ENCODE measurements at regions of chr7 and their contacts with region 1.

Region 1: DNA sequence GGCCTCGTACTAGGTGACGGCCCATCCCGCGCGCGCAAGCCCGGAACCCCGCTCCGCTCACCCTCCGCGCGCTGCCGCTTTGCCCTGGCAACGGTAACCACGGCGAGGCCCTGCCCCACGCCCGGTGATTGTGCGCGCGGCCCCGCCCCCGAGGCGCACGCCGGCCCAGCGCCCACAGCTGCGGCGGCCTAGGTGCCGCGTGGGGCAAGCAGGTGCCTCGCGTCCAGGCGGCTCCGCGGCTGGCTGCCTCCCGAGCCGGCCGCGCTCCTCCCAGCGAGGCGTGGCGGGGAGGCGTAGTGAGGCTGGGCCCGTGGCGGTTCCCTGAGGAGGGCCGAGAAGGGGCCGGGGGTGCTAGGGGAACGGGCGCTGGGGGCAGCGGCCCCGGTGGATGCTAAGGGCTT is at the start of gene SMKR1:
- DNase-seq: peak; percentile 91
- ATAC-seq: peak; percentile 95
- H3K4me3 Mint-ChIP-seq: peak within 1 kb of the TSS; percentile 71
- H3K27ac Mint-ChIP-seq: peak within 1 kb of the TSS; percentile 73
- H3K4me1 Mint-ChIP-seq: peaks cover 11% of the 10 kb centered on the region
- H3K27me3 Mint-ChIP-seq: no peaks in the 10 kb centered on the region
- total RNA-seq, gene SMKR1: 2.3 to 2.7 TPM

Region 2: DNA sequence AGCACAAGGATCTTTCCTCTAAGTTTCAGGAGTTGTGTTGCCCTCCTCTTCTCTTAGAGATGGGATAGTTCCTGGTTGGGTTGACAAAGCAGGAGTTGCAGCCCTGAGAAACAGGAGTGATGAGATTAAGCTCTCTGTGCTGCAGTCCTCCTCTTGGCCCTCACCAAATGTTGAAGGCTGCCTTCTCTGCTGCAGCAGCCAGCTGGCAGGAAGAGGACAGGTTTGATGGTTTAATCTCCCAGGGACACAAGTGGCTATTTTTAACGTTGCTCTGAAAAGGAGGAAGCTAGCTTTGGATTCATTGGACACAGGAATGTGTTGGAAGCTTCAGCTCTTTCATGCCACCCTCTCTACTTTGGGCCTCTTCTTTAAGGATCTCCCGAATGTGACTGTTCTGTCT is 58.8 kb before region 1 on chr7:
- CTCF ChIA-PET with region 1: no interaction called
- POLR2A ChIA-PET with region 1: no interaction called
- intact Hi-C with region 1: no loop called
- DNase-seq: no peak
- ATAC-seq: no peak
- H3K4me3 Mint-ChIP-seq: no peak overlapping the region
- H3K27ac Mint-ChIP-seq: peak overlapping the region; percentile 24
- H3K4me1 Mint-ChIP-seq: peaks cover 23% of the 10 kb centered on the region
- H3K27me3 Mint-ChIP-seq: no peaks in the 10 kb centered on the region

Region 3: DNA sequence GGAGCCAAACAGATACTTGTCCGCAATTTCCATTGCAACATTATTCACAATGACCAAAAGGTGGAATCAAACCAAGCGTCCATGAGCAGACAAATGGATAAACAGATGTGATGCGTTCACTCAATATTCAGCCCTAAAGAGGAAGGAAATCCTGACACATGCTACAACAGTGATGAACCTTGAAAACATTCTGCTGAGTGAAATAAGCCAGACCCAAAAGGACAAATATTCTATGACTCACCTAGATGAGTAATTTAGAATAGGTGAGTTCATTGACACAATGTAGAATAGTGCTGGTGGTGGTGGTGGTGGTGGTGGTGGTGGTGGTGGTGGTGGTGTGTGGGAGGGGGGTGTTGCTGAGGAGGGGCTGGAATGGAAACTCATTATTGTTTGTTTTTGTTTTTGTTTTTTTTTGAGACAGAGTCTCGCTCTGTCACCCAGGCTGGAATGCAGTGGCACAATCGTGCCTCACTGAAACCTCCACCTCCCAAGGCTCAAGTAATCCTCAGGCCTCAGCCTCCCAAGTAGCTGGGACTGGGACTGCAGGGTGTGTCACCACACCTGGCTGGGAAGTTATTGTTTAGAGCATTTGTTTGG is 28.5 kb after region 1 on chr7:
- CTCF ChIA-PET with region 1: no interaction called
- POLR2A ChIA-PET with region 1: no interaction called
- intact Hi-C with region 1: loop called in 1 of 2 experiments (anchors 1 kb)
- DNase-seq: peak; percentile 70
- ATAC-seq: peak; percentile 96
- H3K4me3 Mint-ChIP-seq: no peak overlapping the region
- H3K27ac Mint-ChIP-seq: peak overlapping the region; percentile 13
- H3K4me1 Mint-ChIP-seq: peaks cover 11% of the 10 kb centered on the region
- H3K27me3 Mint-ChIP-seq: peaks cover 10% of the 10 kb centered on the region

Region 4: DNA sequence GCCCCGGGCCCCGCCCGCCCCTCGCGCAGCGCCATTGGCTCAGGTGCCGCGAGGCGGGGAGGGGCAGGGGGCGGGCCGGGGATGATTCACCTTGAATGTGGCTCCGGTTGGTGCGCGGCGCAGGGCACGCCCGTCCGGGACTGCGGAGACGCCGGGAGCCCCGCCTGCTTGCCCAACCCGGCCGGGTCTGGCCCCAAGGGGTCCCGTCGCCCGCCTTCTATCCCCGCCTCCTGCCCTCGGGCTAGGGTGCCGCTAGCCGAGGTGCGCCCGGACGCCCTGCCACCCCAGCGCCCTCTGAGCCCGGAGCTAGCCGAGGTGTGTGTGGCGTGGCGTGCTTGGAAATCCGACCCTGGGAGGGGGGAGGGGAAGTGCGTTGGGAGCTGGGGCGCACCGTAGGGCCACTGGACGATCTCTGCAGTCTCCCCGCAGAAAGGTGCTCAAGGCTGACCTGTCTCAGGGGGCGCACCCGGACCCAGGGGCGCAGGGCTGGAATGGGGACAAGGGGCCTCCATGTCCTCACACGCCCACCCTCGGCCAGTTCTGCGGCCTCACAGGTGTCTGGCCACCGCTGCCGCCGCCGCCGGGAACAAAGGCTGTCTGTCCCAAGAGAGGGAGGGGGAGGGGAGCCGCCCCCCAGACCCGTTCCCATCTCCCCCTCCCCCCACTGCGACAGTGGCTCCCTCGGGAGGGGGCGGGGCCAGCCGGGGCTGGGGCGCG is 278.0 kb after region 1 on chr7:
- CTCF ChIA-PET with region 1: no interaction called
- POLR2A ChIA-PET with region 1: interaction called, 4 read pairs
- intact Hi-C with region 1: loop called in 1 of 2 experiments (anchors 2 kb)
- DNase-seq: peak; percentile 92
- ATAC-seq: peak; percentile 82
- H3K4me3 Mint-ChIP-seq: peak overlapping the region; percentile 66
- H3K27ac Mint-ChIP-seq: no peak overlapping the region
- H3K4me1 Mint-ChIP-seq: peaks cover 33% of the 10 kb centered on the region
- H3K27me3 Mint-ChIP-seq: peaks cover 58% of the 10 kb centered on the region